ENCODE measurements at regions of chr13 and their contacts with region 1.

Region 1: DNA sequence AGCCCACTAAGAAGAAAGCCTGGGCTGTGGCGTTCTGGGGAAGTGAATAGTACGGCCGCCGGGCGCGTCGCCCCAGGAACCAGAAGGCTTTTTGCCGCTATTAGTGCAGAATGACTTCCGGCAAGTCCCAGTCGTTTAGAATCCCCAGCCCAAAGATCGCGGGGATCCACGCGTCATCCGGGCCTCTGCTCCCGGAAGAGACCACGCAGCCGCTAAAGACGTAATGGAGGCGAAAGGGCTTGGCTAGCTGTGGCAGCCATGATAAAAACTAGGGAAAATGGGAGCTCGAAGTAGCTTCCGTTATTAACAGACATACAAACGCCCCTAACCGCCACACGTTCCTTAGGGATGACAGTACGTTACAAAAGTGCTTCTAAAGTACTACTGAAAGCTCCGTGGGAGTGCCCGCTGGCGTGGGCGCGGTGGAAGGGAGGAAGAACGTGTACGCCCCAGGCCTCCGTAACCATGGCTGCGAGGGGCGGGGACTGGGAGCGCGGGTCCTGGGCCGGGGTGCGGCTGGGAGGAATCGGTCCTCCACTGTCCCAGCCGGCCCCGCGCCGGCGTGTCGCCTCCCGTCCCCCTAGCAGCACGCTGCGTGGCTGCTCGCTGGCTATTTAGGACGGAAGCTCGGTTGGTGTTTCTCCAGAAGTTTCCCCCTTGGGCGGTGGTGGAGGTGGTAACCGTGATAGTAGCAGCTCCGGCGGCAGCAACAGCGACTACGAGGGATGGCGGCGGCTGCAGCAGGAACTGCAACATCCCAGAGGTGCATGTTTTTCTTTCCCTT is at the start of gene SUGT1:
- DNase-seq: peak; percentile 96
- ATAC-seq: peak; percentile 96
- H3K4me3 Mint-ChIP-seq: no peak within 1 kb of the TSS
- H3K27ac Mint-ChIP-seq: no peak within 1 kb of the TSS
- H3K4me1 Mint-ChIP-seq: peaks cover 7% of the 10 kb centered on the region
- H3K27me3 Mint-ChIP-seq: no peaks in the 10 kb centered on the region
- CTCF ChIP-seq: no peak; the same call in 1 of the 2 replicates
- total RNA-seq, gene SUGT1: 74.8 to 77.6 TPM (median 76.3 TPM) in 3 replicates

Region 2: DNA sequence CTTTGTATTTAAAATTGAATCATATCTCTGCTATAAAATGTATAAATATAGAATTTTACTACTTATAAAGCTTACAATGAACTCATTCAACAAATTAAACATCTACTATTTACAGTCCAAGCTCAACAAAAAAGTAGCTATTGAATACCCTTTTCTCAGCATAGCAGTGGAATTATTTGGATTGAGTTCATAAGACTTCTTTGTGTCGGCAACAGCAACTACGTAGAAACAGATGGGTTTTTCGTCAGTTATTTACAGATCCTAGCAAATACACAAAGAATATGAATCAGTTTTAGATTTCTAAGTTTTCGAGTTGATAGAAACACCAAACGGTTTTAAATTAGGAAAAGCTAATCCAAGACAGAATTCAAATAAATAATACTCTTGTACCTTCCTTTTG is 482.5 kb before region 1 on chr13:
- CTCF ChIA-PET with region 1: no interaction called
- POLR2A ChIA-PET with region 1: no interaction called
- DNase-seq: no peak
- ATAC-seq: no peak
- H3K4me3 Mint-ChIP-seq: no peak overlapping the region
- H3K27ac Mint-ChIP-seq: no peak overlapping the region
- H3K4me1 Mint-ChIP-seq: no peaks in the 10 kb centered on the region
- H3K27me3 Mint-ChIP-seq: no peaks in the 10 kb centered on the region
- CTCF ChIP-seq: no peak

Region 3: GRCh38 chr13:52617070-52618060 is 35.0 kb before region 1 on chr13:
- CTCF ChIA-PET with region 1: interaction called, 5 read pairs
- POLR2A ChIA-PET with region 1: interaction called, 10 read pairs
- DNase-seq: peak; percentile 85
- ATAC-seq: peak; percentile 100
- H3K4me3 Mint-ChIP-seq: peak overlapping the region; percentile 99
- H3K27ac Mint-ChIP-seq: peak overlapping the region; percentile 41; the same call in 1 of the 2 replicates
- H3K4me1 Mint-ChIP-seq: peaks cover 16% of the 10 kb centered on the region
- H3K27me3 Mint-ChIP-seq: no peaks in the 10 kb centered on the region; the same call in 1 of the 2 replicates
- CTCF ChIP-seq: no peak

Region 4: GRCh38 chr13:52980695-52981094 is 328.3 kb after region 1 on chr13:
- CTCF ChIA-PET with region 1: no interaction called
- POLR2A ChIA-PET with region 1: no interaction called
- DNase-seq: no peak
- ATAC-seq: no peak
- H3K4me3 Mint-ChIP-seq: no peak overlapping the region
- H3K27ac Mint-ChIP-seq: no peak overlapping the region
- H3K4me1 Mint-ChIP-seq: peaks cover 13% of the 10 kb centered on the region
- H3K27me3 Mint-ChIP-seq: no peaks in the 10 kb centered on the region; the same call in 1 of the 2 replicates
- CTCF ChIP-seq: no peak